Posterior vena cava (tissue), 2 donors: ENCODE measurements at regions of chr3 and their contacts with region 1.

Region 1: GRCh38 chr3:24867783-24868182 is 373.1 kb upstream of the THRB start:
- DNase-seq: no peak

Region 2: DNA sequence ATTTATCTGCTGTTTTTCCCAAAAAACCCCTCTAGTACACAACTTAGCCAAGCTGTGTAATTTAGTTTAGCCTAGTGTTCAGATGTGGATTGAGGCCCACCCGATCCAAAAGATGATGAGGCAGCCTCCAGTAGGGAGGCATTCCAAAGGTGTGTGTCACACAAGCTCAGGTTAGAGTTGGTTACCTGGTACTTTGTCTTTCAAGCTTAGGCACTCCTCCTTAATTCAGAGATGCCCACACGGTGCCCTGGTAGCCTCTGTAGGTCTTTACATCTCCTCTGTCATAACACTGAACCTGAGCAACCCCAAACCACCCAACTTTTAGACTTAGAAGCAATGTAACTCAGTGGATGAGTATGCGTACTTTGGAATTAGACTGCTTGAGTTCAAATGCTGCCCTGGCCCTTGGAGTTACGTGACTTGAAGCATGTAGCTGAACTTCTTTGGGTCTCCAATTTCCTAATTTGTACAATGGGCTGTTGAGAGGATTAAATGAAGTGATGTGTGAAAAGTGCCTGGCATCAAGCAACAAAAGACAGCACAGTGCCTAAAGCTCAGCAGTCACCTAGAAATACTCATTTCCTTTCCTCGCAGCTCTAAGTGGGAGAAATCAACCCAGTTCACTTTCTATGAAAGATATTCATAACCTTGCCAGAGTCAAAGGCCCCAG is 275.7 kb after region 1 on chr3:
- intact Hi-C with region 1: loop called in 1 of 2 experiments (anchors 5 kb)
- DNase-seq: no peak

Region 3: DNA sequence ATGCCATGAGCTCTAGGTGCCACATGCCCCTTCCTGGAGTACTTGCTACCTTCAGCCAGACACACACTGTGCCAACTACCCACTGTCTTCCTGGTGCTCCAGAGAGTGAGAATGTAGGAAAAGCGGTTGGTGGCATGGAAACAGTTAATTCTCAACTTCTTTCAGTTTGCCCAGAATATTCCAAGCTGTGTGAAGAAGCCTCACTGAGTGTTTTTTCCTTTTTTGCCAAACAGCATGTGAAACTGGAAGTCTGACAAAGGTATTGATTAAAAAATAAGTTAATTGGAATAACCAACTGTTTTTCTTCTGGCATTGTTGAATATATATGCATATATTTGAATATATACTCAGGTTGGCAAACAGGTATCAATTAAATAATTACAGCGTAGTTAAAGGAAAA is 1807.6 kb after region 1 on chr3:
- intact Hi-C with region 1: loop called in 1 of 2 experiments (anchors 5 kb)
- DNase-seq: no peak